Mammary epithelial cell (primary cell): ENCODE measurements at regions of chr14 and their contacts with region 1.

Region 1: GRCh38 chr14:39673270-39673711 is 241.1 kb upstream of the FBXO33 start:
- DNase-seq: no peak
- H3K4me3 ChIP-seq: no peak overlapping the region
- H3K27ac ChIP-seq: no peak overlapping the region
- H3K4me1 ChIP-seq: no peaks in the 10 kb centered on the region
- H3K27me3 ChIP-seq: no peaks in the 10 kb centered on the region
- CTCF ChIP-seq: no peak

Region 2: DNA sequence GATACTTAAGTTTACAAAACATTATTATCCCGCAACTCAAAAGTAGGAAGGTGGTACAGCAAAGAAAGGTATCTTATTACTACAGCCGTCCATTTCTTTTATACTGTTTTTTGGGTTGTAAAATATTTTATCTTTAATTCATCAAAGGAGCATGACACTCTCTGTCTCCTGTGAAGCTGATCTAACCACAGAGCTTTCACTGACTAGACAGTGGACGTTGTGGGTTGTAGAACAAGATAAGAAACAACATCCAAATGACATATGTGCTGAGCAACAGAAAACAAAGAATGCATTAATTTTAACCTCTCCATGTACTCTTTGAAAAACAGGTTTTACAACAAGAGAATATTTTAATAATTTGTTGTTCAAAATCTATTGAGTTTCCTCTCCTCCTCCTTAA is 45.2 kb before region 1 on chr14:
- CTCF ChIA-PET with region 1: no interaction called
- dilution Hi-C with region 1: loop called (anchors 10 kb)
- in situ Hi-C with region 1: no loop called
- intact Hi-C with region 1: no loop called
- DNase-seq: no peak
- H3K4me3 ChIP-seq: no peak overlapping the region
- H3K27ac ChIP-seq: no peak overlapping the region
- H3K4me1 ChIP-seq: no peaks in the 10 kb centered on the region
- H3K27me3 ChIP-seq: no peaks in the 10 kb centered on the region
- CTCF ChIP-seq: no peak